CD4-positive, alpha-beta memory T cell (primary cell): ENCODE measurements at regions of chrX and their contacts with region 1.

Region 1: GRCh38 chrX:153885968-153886903 is at the start of gene L1CAM:
- DNase-seq: no peak
- H3K4me3 ChIP-seq: no peak within 1 kb of the TSS
- H3K4me3 Mint-ChIP-seq: peak within 1 kb of the TSS in 4 of 8 donors; percentile 42 to 55 (median 52)
- H3K27ac ChIP-seq: no peak within 1 kb of the TSS
- H3K27ac Mint-ChIP-seq: peak within 1 kb of the TSS in 1 of 7 donors; percentile 21
- H3K4me1 ChIP-seq: peaks cover 9% of the 10 kb centered on the region
- H3K4me1 Mint-ChIP-seq: peaks cover 0 to 10% (median 1%) of the 10 kb centered on the region in 4 donors
- H3K27me3 ChIP-seq: peaks cover 5% of the 10 kb centered on the region
- H3K27me3 Mint-ChIP-seq: peaks cover 4 to 6% of the 10 kb centered on the region in 2 donors
- total RNA-seq, gene L1CAM: 1.0 to 1.8 TPM

Region 2: DNA sequence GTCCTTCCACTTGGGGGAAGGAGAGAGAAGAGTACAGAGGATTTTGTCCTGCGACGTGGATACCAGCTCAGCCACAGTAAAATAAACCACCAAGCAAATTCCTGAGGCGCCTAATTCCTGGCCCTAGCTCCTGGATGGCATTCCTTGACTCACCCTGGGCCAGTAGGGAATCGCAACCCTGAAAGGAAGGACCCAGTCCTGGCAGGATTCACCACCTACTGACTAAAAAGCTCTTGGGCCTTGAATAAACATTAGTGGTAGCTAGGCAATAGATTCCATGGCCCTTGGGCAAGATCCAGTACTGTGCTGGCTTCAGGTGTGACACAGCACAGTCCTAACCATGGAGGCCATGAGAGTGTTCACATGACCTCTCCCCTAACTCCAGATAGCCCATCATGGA is 1480.7 kb before region 1 on chrX:
- CTCF ChIA-PET with region 1: no interaction called
- POLR2A ChIA-PET with region 1: no interaction called
- intact Hi-C with region 1: no loop called
- DNase-seq: no peak
- H3K4me3 ChIP-seq: no peak overlapping the region
- H3K4me3 Mint-ChIP-seq: no peak overlapping the region
- H3K27ac ChIP-seq: no peak overlapping the region
- H3K27ac Mint-ChIP-seq: no peak overlapping the region
- H3K4me1 ChIP-seq: no peaks in the 10 kb centered on the region
- H3K4me1 Mint-ChIP-seq: no peaks in the 10 kb centered on the region
- H3K27me3 ChIP-seq: no peaks in the 10 kb centered on the region
- H3K27me3 Mint-ChIP-seq: no peaks in the 10 kb centered on the region

Region 3: DNA sequence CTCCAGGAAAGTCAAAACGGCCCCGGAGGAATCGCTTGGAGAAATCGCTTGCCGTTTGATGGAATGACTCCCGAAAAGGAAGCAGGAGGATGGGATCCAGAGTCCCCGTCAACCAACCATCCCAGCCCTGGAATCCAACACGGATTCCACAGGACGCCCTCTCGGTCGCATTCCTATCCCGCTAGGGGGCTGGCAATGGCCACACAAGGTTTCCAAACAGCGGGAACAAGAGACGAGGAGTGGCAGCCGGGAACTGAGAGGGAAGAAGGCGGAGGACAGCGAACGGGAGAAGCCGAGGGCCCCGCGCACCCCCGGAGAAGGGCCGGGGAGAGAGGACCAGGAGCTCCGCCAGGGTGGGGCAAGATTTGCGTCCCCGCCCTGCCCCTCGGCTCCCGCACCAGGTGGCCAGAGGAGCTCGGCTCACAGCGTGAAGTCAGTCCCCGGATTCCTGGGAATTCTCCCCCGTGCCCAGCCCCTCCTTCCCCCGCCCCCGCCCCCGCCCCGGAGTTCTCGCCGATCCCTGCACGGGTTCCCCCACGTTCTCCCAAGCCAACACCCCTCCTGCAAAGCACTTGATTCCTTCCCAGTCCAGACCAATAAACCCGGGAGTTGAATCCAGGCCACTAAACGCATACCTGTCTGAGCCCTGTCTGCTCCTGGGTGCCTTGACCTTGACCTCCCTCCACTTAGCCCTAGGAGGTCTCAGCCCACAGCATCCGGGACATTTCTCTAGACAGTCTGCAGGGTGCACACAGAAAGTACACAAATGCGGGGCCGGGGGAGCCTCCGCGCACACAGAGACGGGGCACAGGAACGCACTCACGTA is 57.3 kb before region 1 on chrX:
- CTCF ChIA-PET with region 1: no interaction called
- POLR2A ChIA-PET with region 1: no interaction called
- intact Hi-C with region 1: loop called (anchors 10 kb)
- DNase-seq: no peak
- H3K4me3 ChIP-seq: peak overlapping the region in 1 of 2 donors; percentile 35
- H3K4me3 Mint-ChIP-seq: peak overlapping the region; percentile 62 to 83 (median 76)
- H3K27ac ChIP-seq: no peak overlapping the region
- H3K27ac Mint-ChIP-seq: peak overlapping the region in 6 of 7 donors; percentile 48 to 73 (median 67)
- H3K4me1 ChIP-seq: peaks cover 23% of the 10 kb centered on the region
- H3K4me1 Mint-ChIP-seq: peaks cover 16 to 48% (median 27%) of the 10 kb centered on the region in 4 donors
- H3K27me3 ChIP-seq: no peaks in the 10 kb centered on the region
- H3K27me3 Mint-ChIP-seq: no peaks in the 10 kb centered on the region

Region 4: GRCh38 chrX:153900831-153901752 is 14.9 kb after region 1 on chrX:
- CTCF ChIA-PET with region 1: no interaction called
- POLR2A ChIA-PET with region 1: no interaction called
- intact Hi-C with region 1: no loop called
- DNase-seq: peak; percentile 57 to 80 (median 67)
- H3K4me3 ChIP-seq: no peak overlapping the region
- H3K4me3 Mint-ChIP-seq: peak overlapping the region in 7 of 8 donors; percentile 57 to 86 (median 68)
- H3K27ac ChIP-seq: no peak overlapping the region
- H3K27ac Mint-ChIP-seq: peak overlapping the region in 6 of 7 donors; percentile 3 to 87 (median 72)
- H3K4me1 ChIP-seq: peaks cover 40% of the 10 kb centered on the region
- H3K4me1 Mint-ChIP-seq: peaks cover 24 to 47% (median 33%) of the 10 kb centered on the region in 4 donors
- H3K27me3 ChIP-seq: no peaks in the 10 kb centered on the region
- H3K27me3 Mint-ChIP-seq: no peaks in the 10 kb centered on the region

Region 5: DNA sequence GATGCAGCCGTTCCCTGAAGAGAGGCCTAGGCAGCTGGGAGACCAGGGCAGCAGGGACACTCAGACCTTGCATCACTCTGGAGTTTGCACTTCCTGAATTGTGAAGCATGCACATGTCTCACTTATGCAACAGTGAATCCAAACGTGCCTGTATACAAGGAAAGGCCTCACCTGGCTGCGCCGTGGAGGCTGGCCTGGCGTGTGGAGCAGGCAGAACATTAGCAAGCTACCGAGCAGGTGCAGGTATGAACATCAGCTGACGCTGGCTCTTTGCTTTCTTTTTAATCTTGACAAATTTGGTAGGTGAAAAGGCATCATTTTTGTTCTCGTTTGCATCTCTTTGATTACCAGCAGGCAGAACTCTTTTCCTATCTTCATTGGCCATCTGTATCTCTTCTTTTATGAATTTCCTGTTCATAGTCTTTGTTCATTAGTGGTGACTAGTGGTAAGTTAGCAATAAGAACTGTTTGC is 170.6 kb after region 1 on chrX:
- CTCF ChIA-PET with region 1: no interaction called
- POLR2A ChIA-PET with region 1: no interaction called
- intact Hi-C with region 1: no loop called
- DNase-seq: peak in 4 of 5 donors; percentile 32 to 45 (median 42)
- H3K4me3 ChIP-seq: no peak overlapping the region
- H3K4me3 Mint-ChIP-seq: peak overlapping the region in 7 of 8 donors; percentile 0 to 67 (median 36)
- H3K27ac ChIP-seq: no peak overlapping the region
- H3K27ac Mint-ChIP-seq: peak overlapping the region; percentile 24 to 93 (median 60)
- H3K4me1 ChIP-seq: peaks cover 66% of the 10 kb centered on the region
- H3K4me1 Mint-ChIP-seq: peaks cover 42 to 66% (median 51%) of the 10 kb centered on the region in 4 donors
- H3K27me3 ChIP-seq: no peaks in the 10 kb centered on the region
- H3K27me3 Mint-ChIP-seq: no peaks in the 10 kb centered on the region

Region 6: GRCh38 chrX:154411322-154411980 is 525.2 kb after region 1 on chrX and contains the start of gene TAFAZZIN:
- CTCF ChIA-PET with region 1: no interaction called
- POLR2A ChIA-PET with region 1: no interaction called
- intact Hi-C with region 1: no loop called
- DNase-seq: peak; percentile 70 to 76 (median 75)
- H3K4me3 ChIP-seq: peak within 1 kb of the TSS; percentile 42 to 51
- H3K4me3 Mint-ChIP-seq: peak within 1 kb of the TSS; percentile 87 to 98 (median 90)
- H3K27ac ChIP-seq: peak within 1 kb of the TSS; percentile 70
- H3K27ac Mint-ChIP-seq: peak within 1 kb of the TSS; percentile 90 to 95 (median 94)
- H3K4me1 ChIP-seq: peaks cover 10% of the 10 kb centered on the region
- H3K4me1 Mint-ChIP-seq: peaks cover 4 to 24% (median 11%) of the 10 kb centered on the region in 4 donors
- H3K27me3 ChIP-seq: no peaks in the 10 kb centered on the region
- H3K27me3 Mint-ChIP-seq: no peaks in the 10 kb centered on the region
- total RNA-seq, gene TAFAZZIN: 139 to 141 TPM